Activated naive CD4-positive, alpha-beta T cell treated with anti-CD3 and anti-CD28 coated beads, Interleukin-2, amount 10 ng/mL, durations not matched to agents 7 days and 5 days (primary cell): ENCODE measurements at regions of chr1 and their contacts with region 1.

Region 1: GRCh38 chr1:101309334-101310311 is 72.8 kb downstream of the S1PR1 start:
- DNase-seq: peak; percentile 81
- H3K4me3 Mint-ChIP-seq: peak overlapping the region; percentile 76
- H3K27ac Mint-ChIP-seq: peak overlapping the region; percentile 99
- H3K4me1 Mint-ChIP-seq: peaks cover 74% of the 10 kb centered on the region
- H3K27me3 Mint-ChIP-seq: no peaks in the 10 kb centered on the region

Region 2: GRCh38 chr1:101136739-101137138 is 172.9 kb before region 1 on chr1:
- CTCF ChIA-PET with region 1: interaction called, 11 read pairs
- DNase-seq: peak; percentile 54
- H3K4me3 Mint-ChIP-seq: peak overlapping the region; percentile 45
- H3K27ac Mint-ChIP-seq: peak overlapping the region; percentile 86
- H3K4me1 Mint-ChIP-seq: peaks cover 72% of the 10 kb centered on the region
- H3K27me3 Mint-ChIP-seq: no peaks in the 10 kb centered on the region

Region 3: DNA sequence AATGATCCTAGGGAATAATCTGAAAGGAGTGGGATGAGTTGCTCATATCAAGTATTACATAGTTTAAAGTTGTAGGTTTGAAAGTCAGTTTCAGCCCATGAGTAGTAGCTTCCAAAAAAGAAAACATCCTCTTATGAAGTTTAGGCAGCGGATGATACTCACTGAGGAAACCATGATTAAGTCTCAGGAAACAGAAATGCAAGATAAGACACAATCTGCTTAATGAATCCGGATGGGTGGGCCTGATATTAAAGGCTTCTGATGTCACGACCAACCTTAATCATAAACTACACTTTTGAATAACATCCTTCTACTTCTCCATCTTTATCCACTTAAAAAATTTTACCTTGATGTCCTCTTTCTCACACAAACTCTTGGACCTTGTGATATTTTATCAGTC is 11.0 kb before region 1 on chr1:
- CTCF ChIA-PET with region 1: interaction called, 26 read pairs
- DNase-seq: no peak
- H3K4me3 Mint-ChIP-seq: no peak overlapping the region
- H3K27ac Mint-ChIP-seq: no peak overlapping the region
- H3K4me1 Mint-ChIP-seq: peaks cover 20% of the 10 kb centered on the region
- H3K27me3 Mint-ChIP-seq: no peaks in the 10 kb centered on the region

Region 4: DNA sequence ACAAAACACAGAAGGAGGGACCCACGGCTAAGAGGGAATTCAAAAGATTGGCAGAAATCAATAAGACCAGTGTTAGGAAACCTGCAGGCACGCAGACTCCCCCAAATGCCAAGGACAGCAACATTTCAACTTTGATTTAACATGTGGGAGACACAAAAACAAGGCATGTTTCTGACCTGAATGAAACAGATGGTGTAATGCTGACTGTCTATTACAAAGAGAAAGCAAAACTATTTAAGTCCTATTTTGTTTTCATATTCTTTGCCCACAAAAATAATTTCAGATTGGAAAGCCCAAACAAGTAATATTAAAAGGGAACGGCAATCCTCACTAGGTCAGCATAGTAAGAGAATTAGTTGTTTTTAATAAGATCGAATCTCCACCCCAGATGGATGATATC is 35.1 kb after region 1 on chr1:
- CTCF ChIA-PET with region 1: interaction called, 20 read pairs
- DNase-seq: no peak
- H3K4me3 Mint-ChIP-seq: no peak overlapping the region
- H3K27ac Mint-ChIP-seq: peak overlapping the region; percentile 5
- H3K4me1 Mint-ChIP-seq: peaks cover 44% of the 10 kb centered on the region
- H3K27me3 Mint-ChIP-seq: peaks cover 4% of the 10 kb centered on the region

Region 5: GRCh38 chr1:101420406-101420805 is 110.8 kb after region 1 on chr1:
- CTCF ChIA-PET with region 1: no interaction called
- DNase-seq: no peak
- H3K4me3 Mint-ChIP-seq: no peak overlapping the region
- H3K27ac Mint-ChIP-seq: no peak overlapping the region
- H3K4me1 Mint-ChIP-seq: no peaks in the 10 kb centered on the region
- H3K27me3 Mint-ChIP-seq: no peaks in the 10 kb centered on the region

Region 6: DNA sequence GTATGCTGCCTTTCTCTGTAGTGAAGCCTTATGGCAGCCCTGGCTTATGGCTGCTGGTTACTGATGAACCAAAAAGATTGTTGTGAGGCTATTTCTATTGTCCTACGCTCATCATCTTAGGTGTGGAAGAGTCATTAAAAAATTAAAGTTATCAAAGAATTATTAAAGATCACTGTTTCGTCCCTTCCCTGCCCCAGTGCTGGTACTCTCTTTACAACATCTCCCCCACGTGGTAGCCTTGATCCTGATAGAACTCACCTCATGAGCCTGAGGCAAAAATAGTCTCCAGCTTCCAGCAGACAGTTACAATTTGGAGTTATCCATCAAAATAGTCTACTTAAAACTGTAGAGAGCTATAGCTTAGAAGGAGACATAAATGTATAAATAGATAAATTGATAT is 128.7 kb after region 1 on chr1:
- CTCF ChIA-PET with region 1: interaction called, 22 read pairs
- DNase-seq: no peak
- H3K4me3 Mint-ChIP-seq: no peak overlapping the region
- H3K27ac Mint-ChIP-seq: no peak overlapping the region
- H3K4me1 Mint-ChIP-seq: no peaks in the 10 kb centered on the region
- H3K27me3 Mint-ChIP-seq: peaks cover 22% of the 10 kb centered on the region